ENCODE measurements at regions of chr18 and their contacts with region 1.

Region 1: GRCh38 chr18:8140841-8141501 is 468.3 kb upstream of the RAB12 start:
- DNase-seq: no peak
- H3K4me3 ChIP-seq: no peak overlapping the region
- H3K27ac ChIP-seq: no peak overlapping the region
- H3K4me1 ChIP-seq: no peaks in the 10 kb centered on the region
- H3K27me3 ChIP-seq: no peaks in the 10 kb centered on the region
- CTCF ChIP-seq: no peak

Region 2: GRCh38 chr18:7749510-7749981 is 391.4 kb before region 1 on chr18:
- CTCF ChIA-PET with region 1: no interaction called
- POLR2A ChIA-PET with region 1: no interaction called
- intact Hi-C with region 1: loop called (anchors 2 kb)
- DNase-seq: no peak
- H3K4me3 ChIP-seq: no peak overlapping the region
- H3K27ac ChIP-seq: no peak overlapping the region
- H3K4me1 ChIP-seq: no peaks in the 10 kb centered on the region
- H3K27me3 ChIP-seq: no peaks in the 10 kb centered on the region
- CTCF ChIP-seq: no peak

Region 3: GRCh38 chr18:8084160-8084559 is 56.8 kb before region 1 on chr18:
- CTCF ChIA-PET with region 1: no interaction called
- POLR2A ChIA-PET with region 1: no interaction called
- intact Hi-C with region 1: no loop called
- DNase-seq: no peak
- H3K4me3 ChIP-seq: no peak overlapping the region
- H3K27ac ChIP-seq: no peak overlapping the region
- H3K4me1 ChIP-seq: no peaks in the 10 kb centered on the region
- H3K27me3 ChIP-seq: no peaks in the 10 kb centered on the region
- CTCF ChIP-seq: peak; percentile 34

Region 4: GRCh38 chr18:8177330-8178016 is 36.5 kb after region 1 on chr18:
- CTCF ChIA-PET with region 1: no interaction called
- POLR2A ChIA-PET with region 1: no interaction called
- intact Hi-C with region 1: no loop called
- DNase-seq: no peak
- H3K4me3 ChIP-seq: no peak overlapping the region
- H3K27ac ChIP-seq: 0 out of 2 replicates have a peak overlapping the region, but pooled peaks have one; percentile 6
- H3K4me1 ChIP-seq: peaks cover 10% of the 10 kb centered on the region; the same call in 1 of the 2 replicates
- H3K27me3 ChIP-seq: no peaks in the 10 kb centered on the region
- CTCF ChIP-seq: no peak

Region 5: GRCh38 chr18:8242151-8242696 is 101.3 kb after region 1 on chr18:
- CTCF ChIA-PET with region 1: no interaction called
- POLR2A ChIA-PET with region 1: no interaction called
- intact Hi-C with region 1: no loop called
- DNase-seq: no peak
- H3K4me3 ChIP-seq: no peak overlapping the region
- H3K27ac ChIP-seq: no peak overlapping the region
- H3K4me1 ChIP-seq: no peaks in the 10 kb centered on the region
- H3K27me3 ChIP-seq: no peaks in the 10 kb centered on the region
- CTCF ChIP-seq: no peak

Region 6: DNA sequence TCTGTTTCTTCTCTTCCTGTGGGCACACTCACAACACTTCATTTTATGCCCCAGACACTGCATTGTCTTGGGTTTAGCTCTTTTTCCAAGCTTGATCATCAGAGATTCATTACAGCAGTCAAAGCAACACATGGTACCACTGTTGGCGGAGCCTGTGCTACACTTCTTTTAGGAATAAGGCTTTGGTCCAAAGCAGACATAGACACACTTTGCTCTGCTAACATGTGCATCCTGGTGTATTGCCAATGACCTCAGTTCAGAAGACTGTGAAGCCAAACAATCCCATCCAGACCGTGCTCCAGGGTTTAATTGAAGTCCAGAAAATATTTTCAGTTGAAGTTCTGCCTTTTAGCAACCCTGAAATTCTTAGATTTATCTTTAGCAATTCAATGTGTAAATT is 113.7 kb after region 1 on chr18:
- CTCF ChIA-PET with region 1: no interaction called
- POLR2A ChIA-PET with region 1: no interaction called
- intact Hi-C with region 1: no loop called
- DNase-seq: no peak
- H3K4me3 ChIP-seq: no peak overlapping the region
- H3K27ac ChIP-seq: no peak overlapping the region
- H3K4me1 ChIP-seq: peaks cover 2% of the 10 kb centered on the region; the same call in 1 of the 2 replicates
- H3K27me3 ChIP-seq: no peaks in the 10 kb centered on the region
- CTCF ChIP-seq: no peak

Measured in PC-9 (cell line).